Mammary epithelial cell (primary cell): ENCODE measurements at regions of chr7 and their contacts with region 1.

Region 1: DNA sequence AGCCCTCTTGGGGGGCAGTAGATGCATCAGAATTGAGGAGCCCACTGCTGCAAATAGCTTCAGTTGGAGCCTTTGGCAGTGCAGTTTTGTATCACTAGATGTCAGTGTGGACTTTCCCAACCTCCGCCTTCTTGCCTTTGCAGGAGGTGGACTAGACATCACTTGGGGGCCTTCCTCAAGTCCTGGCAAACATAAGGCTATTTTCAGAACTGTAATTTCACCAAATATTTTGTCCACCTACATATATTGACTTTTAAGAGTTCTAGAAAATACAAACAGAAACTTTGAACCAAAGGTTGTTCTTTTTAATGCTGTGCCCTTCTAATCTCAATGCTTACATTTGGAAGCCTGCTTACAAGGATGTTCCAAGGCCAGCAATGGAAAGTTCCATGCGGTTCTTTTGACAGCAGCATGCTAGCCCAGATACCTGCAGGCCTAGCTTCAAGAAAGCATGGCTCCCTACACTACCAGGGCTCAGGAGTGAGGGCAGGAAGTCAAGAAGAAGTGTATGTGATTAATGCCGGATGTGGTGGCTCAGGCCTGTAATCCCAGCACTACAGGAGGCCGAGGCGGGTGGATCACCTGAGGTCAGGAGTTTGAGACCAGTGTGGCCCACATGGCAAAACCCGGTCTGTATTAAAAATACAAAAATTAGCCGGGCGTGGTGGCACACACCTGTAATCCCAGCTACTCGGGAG is 8.0 kb upstream of the ZNRF2 start:
- DNase-seq: peak; percentile 39
- H3K4me3 ChIP-seq: no peak overlapping the region
- H3K27ac ChIP-seq: no peak overlapping the region
- H3K4me1 ChIP-seq: no peaks in the 10 kb centered on the region
- H3K27me3 ChIP-seq: no peaks in the 10 kb centered on the region
- CTCF ChIP-seq: peak; percentile 68 to 76

Region 2: GRCh38 chr7:30062591-30062990 is 213.8 kb before region 1 on chr7:
- CTCF ChIA-PET with region 1: interaction called, 15 read pairs
- dilution Hi-C with region 1: no loop called
- in situ Hi-C with region 1: no loop called
- intact Hi-C with region 1: no loop called
- DNase-seq: peak; percentile 5
- H3K4me3 ChIP-seq: no peak overlapping the region
- H3K27ac ChIP-seq: no peak overlapping the region
- H3K4me1 ChIP-seq: no peaks in the 10 kb centered on the region
- H3K27me3 ChIP-seq: no peaks in the 10 kb centered on the region
- CTCF ChIP-seq: peak; percentile 50 to 53

Region 3: GRCh38 chr7:30348083-30348560 is 71.8 kb after region 1 on chr7:
- CTCF ChIA-PET with region 1: no interaction called
- dilution Hi-C with region 1: no loop called
- in situ Hi-C with region 1: no loop called
- intact Hi-C with region 1: loop called (anchors 2 kb)
- DNase-seq: peak; percentile 92
- H3K4me3 ChIP-seq: peak overlapping the region in 1 of 3 experiments; percentile 41
- H3K27ac ChIP-seq: peak overlapping the region; percentile 68
- H3K4me1 ChIP-seq: peaks cover 21% of the 10 kb centered on the region
- H3K27me3 ChIP-seq: no peaks in the 10 kb centered on the region
- CTCF ChIP-seq: no peak

Region 4: DNA sequence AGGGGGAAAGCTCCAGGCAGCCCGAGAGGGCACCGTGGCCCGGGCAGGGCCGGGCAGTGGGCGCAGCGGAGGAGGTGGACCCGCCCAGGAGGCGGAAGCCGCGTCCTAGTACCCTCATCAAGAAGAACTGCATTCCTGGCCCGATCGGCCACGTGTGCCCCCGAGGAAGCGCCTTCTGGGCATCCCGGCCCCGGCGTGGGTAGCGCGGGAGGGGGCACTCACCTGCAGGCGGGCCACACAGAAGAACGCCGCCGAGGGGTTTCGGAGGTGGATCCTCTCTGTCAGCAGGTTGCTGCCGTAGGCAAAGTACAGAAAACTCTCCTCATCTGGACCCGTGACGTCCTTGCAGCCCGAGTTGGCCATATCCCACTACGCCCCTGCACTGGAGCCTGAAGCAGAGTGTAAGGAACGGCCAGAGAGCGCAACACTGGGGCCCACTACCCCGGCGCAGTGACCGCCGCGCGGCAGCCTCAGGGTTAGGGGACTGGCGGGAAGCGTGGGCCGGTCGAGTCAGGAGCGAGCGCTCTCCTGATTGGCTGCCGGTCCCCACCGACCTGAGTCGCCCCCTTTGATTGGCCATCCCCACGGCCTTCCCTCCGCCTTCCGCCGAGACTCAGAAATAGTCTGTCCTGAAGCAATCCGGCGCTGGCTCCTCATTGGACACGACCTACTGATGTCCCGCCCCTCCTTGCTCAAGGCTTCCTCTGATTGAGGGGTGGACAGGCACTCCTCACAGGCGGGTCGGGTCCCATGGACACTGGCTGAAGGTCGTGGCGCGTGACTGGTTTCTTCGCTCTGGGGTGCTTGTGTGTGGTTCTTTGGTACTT is 228.2 kb after region 1 on chr7 and contains the start of gene GGCT:
- CTCF ChIA-PET with region 1: no interaction called
- dilution Hi-C with region 1: no loop called
- in situ Hi-C with region 1: no loop called
- intact Hi-C with region 1: loop called (anchors 2 kb)
- DNase-seq: peak; percentile 97
- H3K4me3 ChIP-seq: peak within 1 kb of the TSS; percentile 74 to 99 (median 88)
- H3K27ac ChIP-seq: peak within 1 kb of the TSS; percentile 72
- H3K4me1 ChIP-seq: peaks cover 29% of the 10 kb centered on the region
- H3K27me3 ChIP-seq: no peaks in the 10 kb centered on the region
- CTCF ChIP-seq: no peak
- total RNA-seq, gene GGCT: 25.7 to 60.3 TPM

Region 5: GRCh38 chr7:30564243-30564892 is 288.0 kb after region 1 on chr7:
- CTCF ChIA-PET with region 1: interaction called, 9 read pairs
- dilution Hi-C with region 1: no loop called
- in situ Hi-C with region 1: loop called in 1 of 2 experiments (anchors 10 kb)
- intact Hi-C with region 1: loop called (anchors 1 kb)
- DNase-seq: peak; percentile 78
- H3K4me3 ChIP-seq: no peak overlapping the region
- H3K27ac ChIP-seq: peak overlapping the region; percentile 77
- H3K4me1 ChIP-seq: peaks cover 24% of the 10 kb centered on the region
- H3K27me3 ChIP-seq: no peaks in the 10 kb centered on the region
- CTCF ChIP-seq: peak; percentile 81 to 91

Region 6: DNA sequence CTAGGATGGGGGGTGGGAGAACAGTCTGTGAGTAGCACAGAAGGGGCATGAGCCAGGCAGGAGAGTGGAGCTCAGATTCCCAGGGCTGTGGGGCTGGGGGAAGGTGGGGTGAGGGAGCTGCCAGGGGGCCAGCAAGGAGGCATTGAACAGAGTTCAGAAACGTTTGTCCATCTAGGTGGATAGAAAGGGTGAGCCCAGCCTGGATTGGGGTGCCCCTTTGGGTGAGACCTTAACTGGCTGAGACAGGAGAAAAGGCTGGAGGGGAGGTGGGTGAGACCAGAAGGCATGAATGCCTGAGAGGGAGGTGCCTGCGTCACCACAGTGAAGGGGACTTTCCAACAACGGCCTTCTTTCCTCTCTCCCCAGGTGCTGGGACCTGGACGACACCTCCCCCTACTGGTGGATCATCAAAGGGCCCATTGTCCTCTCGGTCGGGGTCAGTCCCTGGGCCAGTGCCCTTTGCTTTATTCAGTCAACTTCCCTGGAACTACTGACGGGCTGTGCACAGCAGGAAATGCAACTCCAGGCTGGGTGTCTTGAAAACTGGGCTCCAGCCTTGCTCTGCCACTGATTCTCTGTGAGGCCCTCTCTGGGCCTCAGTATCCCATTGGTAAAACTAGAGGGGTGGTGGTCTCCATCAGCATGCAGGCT is 698.4 kb after region 1 on chr7:
- CTCF ChIA-PET with region 1: no interaction called
- dilution Hi-C with region 1: no loop called
- in situ Hi-C with region 1: no loop called
- intact Hi-C with region 1: loop called (anchors 10 kb)
- DNase-seq: peak; percentile 76
- H3K4me3 ChIP-seq: no peak overlapping the region
- H3K27ac ChIP-seq: no peak overlapping the region
- H3K4me1 ChIP-seq: no peaks in the 10 kb centered on the region
- H3K27me3 ChIP-seq: no peaks in the 10 kb centered on the region
- CTCF ChIP-seq: peak; percentile 89 to 93